B cell (primary cell): ENCODE measurements at regions of chr9 and their contacts with region 1.

Region 1: DNA sequence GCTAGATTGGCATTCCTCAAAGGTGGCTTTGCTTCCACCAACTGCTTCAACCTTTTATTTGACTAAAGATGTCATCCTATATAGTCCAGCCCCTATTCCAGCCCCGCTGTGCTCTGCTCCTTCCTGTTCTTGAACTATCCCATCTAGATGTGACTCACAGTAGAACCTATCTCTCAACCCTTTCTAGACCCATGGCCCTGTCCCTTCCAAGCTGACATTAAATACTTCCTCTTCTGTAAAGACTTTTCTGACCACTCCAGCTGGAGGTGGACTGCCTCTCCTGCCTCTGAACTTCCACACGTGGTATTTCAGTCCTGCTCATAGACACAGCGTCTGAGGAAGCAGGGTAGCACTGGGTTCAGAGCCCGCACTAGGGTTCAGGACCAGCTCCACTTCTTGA is 32.4 kb downstream of the OSTF1 start:
- DNase-seq: no peak
- ATAC-seq: no peak
- H3K4me3 ChIP-seq: no peak overlapping the region
- H3K4me3 Mint-ChIP-seq: no peak overlapping the region
- H3K27ac ChIP-seq: no peak overlapping the region
- H3K27ac Mint-ChIP-seq: no peak overlapping the region
- H3K4me1 ChIP-seq: peaks cover 4 to 5% of the 10 kb centered on the region in 2 donors
- H3K4me1 Mint-ChIP-seq: peaks cover 27% of the 10 kb centered on the region
- H3K27me3 ChIP-seq: no peaks in the 10 kb centered on the region
- H3K27me3 Mint-ChIP-seq: no peaks in the 10 kb centered on the region
- CTCF ChIP-seq: no peak

Region 2: GRCh38 chr9:75086853-75087677 is 33.6 kb before region 1 on chr9:
- CTCF ChIA-PET with region 1: no interaction called
- POLR2A ChIA-PET with region 1: no interaction called
- intact Hi-C with region 1: no loop called
- DNase-seq: peak; percentile 55
- ATAC-seq: no peak
- H3K4me3 ChIP-seq: peak overlapping the region; percentile 81 to 91 (median 88)
- H3K4me3 Mint-ChIP-seq: peak overlapping the region; percentile 95
- H3K27ac ChIP-seq: peak overlapping the region; percentile 73 to 79
- H3K27ac Mint-ChIP-seq: peak overlapping the region; percentile 94
- H3K4me1 ChIP-seq: peaks cover 47 to 49% of the 10 kb centered on the region in 2 donors
- H3K4me1 Mint-ChIP-seq: peaks cover 39% of the 10 kb centered on the region
- H3K27me3 ChIP-seq: no peaks in the 10 kb centered on the region
- H3K27me3 Mint-ChIP-seq: no peaks in the 10 kb centered on the region
- CTCF ChIP-seq: no peak

Region 3: DNA sequence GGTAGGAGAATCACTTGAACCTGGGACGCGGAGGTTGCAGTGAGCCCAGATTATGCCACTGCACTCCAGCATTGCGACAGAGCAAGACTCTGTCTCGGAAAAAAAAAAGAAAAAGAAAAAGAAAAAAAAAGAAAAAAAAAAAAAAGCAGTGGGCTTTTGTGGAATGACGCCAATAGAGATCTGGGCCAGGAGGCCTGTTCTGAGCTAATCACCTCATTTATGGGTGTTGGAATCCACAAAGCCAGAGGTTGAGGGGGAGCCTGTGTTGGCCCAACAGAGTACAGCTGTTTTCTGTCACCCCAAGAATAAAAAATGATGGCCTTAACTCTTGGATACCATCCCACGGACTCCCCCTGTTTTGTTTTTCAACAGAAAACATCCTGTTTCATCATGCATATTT is 13.8 kb before region 1 on chr9:
- CTCF ChIA-PET with region 1: interaction called, 3 read pairs
- POLR2A ChIA-PET with region 1: no interaction called
- intact Hi-C with region 1: loop called (anchors 1 kb)
- DNase-seq: no peak
- ATAC-seq: no peak
- H3K4me3 ChIP-seq: no peak overlapping the region
- H3K4me3 Mint-ChIP-seq: no peak overlapping the region
- H3K27ac ChIP-seq: no peak overlapping the region
- H3K27ac Mint-ChIP-seq: no peak overlapping the region
- H3K4me1 ChIP-seq: peaks cover 5 to 16% of the 10 kb centered on the region in 2 donors
- H3K4me1 Mint-ChIP-seq: peaks cover 50% of the 10 kb centered on the region
- H3K27me3 ChIP-seq: no peaks in the 10 kb centered on the region
- H3K27me3 Mint-ChIP-seq: no peaks in the 10 kb centered on the region
- CTCF ChIP-seq: no peak